MCF 10A (cell line): ENCODE measurements at regions of chr10 and their contacts with region 1.

Region 1: DNA sequence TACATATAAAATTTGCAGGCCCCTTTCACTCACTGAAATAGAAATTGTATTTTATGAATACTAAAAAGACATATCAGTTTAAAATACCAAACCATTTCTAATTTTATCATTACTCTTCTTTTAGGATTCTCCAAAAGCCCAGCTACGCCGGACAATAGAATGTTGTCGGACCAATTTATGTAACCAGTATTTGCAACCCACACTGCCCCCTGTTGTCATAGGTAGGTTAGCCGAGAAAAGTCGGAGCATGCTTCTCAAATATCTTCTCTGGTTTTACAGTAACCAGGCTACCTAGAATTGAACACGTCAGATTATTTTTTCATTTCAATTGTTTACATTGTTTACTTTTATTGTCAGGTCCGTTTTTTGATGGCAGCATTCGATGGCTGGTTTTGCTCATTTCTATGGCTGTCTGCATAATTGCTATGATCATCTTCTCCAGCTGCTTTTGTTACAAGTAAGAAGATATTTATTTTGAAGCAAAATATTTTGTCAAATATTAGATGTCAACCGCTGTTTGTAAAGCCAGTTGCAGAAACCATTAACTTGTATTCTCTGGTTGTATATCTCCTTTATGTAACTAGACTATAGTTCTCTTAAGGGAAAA is 57.6 kb downstream of the MMRN2 start:
- DNase-seq: peak; percentile 75
- H3K4me3 Mint-ChIP-seq: no peak overlapping the region
- H3K27ac Mint-ChIP-seq: no peak overlapping the region
- H3K4me1 Mint-ChIP-seq: no peaks in the 10 kb centered on the region
- H3K27me3 Mint-ChIP-seq: no peaks in the 10 kb centered on the region
- CTCF ChIP-seq: peak; percentile 63

Region 2: DNA sequence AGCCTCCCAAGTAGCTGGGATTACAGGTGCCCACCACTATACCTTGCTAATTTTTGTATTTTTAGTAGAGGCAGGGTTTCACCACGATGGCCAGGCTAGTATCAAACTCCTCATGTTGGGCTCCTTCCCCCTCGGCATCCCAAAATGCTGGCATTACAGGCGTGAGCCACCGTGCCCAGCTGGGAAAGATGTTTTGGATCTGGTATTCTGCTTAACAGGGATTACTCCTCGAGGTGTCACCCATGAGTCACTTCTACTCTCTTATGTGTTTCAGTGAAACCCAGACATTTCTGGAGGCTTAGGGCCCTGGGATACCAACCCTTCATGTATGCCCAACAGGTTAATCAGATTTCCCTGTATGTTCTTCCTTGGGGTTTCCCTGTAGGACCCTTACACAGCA is 257.3 kb before region 1 on chr10:
- CTCF ChIA-PET with region 1: interaction called, 11 read pairs
- POLR2A ChIA-PET with region 1: no interaction called
- intact Hi-C with region 1: loop called (anchors 5 kb)
- DNase-seq: peak; percentile 37
- H3K4me3 Mint-ChIP-seq: no peak overlapping the region
- H3K27ac Mint-ChIP-seq: no peak overlapping the region
- H3K4me1 Mint-ChIP-seq: peaks cover 13% of the 10 kb centered on the region
- H3K27me3 Mint-ChIP-seq: no peaks in the 10 kb centered on the region
- CTCF ChIP-seq: no peak

Region 3: DNA sequence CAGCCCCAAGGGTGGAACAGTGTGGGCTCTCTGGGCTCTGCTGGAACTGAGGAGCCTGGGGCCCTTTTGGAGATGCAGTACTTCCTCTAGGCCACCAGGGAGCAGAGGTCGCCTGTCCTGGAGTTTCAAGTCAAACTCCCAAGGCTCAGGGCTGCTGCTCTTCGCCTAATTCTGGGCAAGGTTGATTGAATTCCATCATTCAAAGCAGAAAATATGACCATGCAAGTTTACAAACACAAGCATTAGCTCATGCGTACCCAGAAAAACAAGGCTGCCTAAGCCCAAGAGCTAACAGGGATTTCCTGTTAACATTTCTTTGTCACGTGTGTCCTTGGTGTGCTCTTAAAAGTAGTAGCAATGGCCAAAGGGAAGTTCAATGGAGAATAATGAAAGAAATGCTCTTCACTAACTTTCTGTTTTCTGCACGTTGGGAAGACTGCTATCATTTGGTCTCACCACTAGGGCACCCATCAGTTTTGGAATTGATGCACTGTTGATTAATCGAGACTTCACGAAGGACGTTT is 211.3 kb before region 1 on chr10:
- CTCF ChIA-PET with region 1: interaction called, 54 read pairs
- POLR2A ChIA-PET with region 1: no interaction called
- intact Hi-C with region 1: loop called (anchors 1 kb)
- DNase-seq: peak; percentile 67
- H3K4me3 Mint-ChIP-seq: no peak overlapping the region
- H3K27ac Mint-ChIP-seq: no peak overlapping the region
- H3K4me1 Mint-ChIP-seq: no peaks in the 10 kb centered on the region
- H3K27me3 Mint-ChIP-seq: peaks cover 15% of the 10 kb centered on the region
- CTCF ChIP-seq: peak; percentile 76

Region 4: GRCh38 chr10:86710987-86711512 is 188.7 kb before region 1 on chr10:
- CTCF ChIA-PET with region 1: interaction called, 6 read pairs
- POLR2A ChIA-PET with region 1: interaction called, 3 read pairs
- intact Hi-C with region 1: loop called (anchors 1 kb)
- DNase-seq: peak; percentile 89
- H3K4me3 Mint-ChIP-seq: peak overlapping the region; percentile 73
- H3K27ac Mint-ChIP-seq: peak overlapping the region; percentile 96
- H3K4me1 Mint-ChIP-seq: peaks cover 5% of the 10 kb centered on the region
- H3K27me3 Mint-ChIP-seq: no peaks in the 10 kb centered on the region
- CTCF ChIP-seq: peak; percentile 85

Region 5: GRCh38 chr10:86918022-86918471 is 18.3 kb after region 1 on chr10:
- CTCF ChIA-PET with region 1: no interaction called
- POLR2A ChIA-PET with region 1: no interaction called
- intact Hi-C with region 1: no loop called
- DNase-seq: peak; percentile 61
- H3K4me3 Mint-ChIP-seq: no peak overlapping the region
- H3K27ac Mint-ChIP-seq: peak overlapping the region; percentile 40
- H3K4me1 Mint-ChIP-seq: peaks cover 10% of the 10 kb centered on the region
- H3K27me3 Mint-ChIP-seq: no peaks in the 10 kb centered on the region
- CTCF ChIP-seq: no peak

Region 6: GRCh38 chr10:87089746-87090145 is 190.0 kb after region 1 on chr10:
- CTCF ChIA-PET with region 1: no interaction called
- POLR2A ChIA-PET with region 1: no interaction called
- intact Hi-C with region 1: no loop called
- DNase-seq: no peak
- H3K4me3 Mint-ChIP-seq: peak overlapping the region; percentile 19
- H3K27ac Mint-ChIP-seq: no peak overlapping the region
- H3K4me1 Mint-ChIP-seq: peaks cover 45% of the 10 kb centered on the region
- H3K27me3 Mint-ChIP-seq: no peaks in the 10 kb centered on the region
- CTCF ChIP-seq: no peak